GM23248 (cell line): ENCODE measurements at regions of chr7 and their contacts with region 1.

Region 1: GRCh38 chr7:152336754-152337368 is 98.9 kb downstream of the KMT2C start:
- DNase-seq: peak; percentile 71
- H3K4me3 ChIP-seq: no peak overlapping the region
- H3K27ac ChIP-seq: no peak overlapping the region
- H3K4me1 ChIP-seq: peaks cover 12% of the 10 kb centered on the region; the same call in 1 of the 2 replicates
- H3K27me3 ChIP-seq: no peaks in the 10 kb centered on the region

Region 2: DNA sequence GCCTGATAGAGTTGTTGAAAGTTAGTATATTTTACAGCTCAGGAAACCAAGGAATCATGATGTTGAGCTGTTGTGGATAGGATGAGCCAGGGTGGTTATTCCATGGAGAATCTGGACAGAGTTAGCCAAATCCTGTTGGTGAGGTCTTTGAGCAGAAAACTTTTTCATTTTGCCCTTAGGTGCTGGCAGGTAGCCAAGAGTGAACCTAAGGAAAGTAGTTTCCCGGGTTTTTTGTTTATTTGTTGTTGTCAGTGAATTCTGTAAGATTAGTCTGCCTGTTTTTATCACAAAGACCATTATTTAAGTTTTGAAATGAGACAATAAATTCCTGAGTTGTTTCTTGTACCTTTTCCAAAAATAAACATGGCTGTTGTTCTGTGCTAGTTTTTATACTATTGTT is 250.3 kb before region 1 on chr7:
- in situ Hi-C with region 1: no loop called
- DNase-seq: no peak
- H3K4me3 ChIP-seq: no peak overlapping the region
- H3K27ac ChIP-seq: no peak overlapping the region
- H3K4me1 ChIP-seq: no peaks in the 10 kb centered on the region
- H3K27me3 ChIP-seq: no peaks in the 10 kb centered on the region

Region 3: GRCh38 chr7:152615031-152615741 is 278.3 kb after region 1 on chr7:
- in situ Hi-C with region 1: no loop called
- DNase-seq: peak; percentile 24
- H3K4me3 ChIP-seq: no peak overlapping the region
- H3K27ac ChIP-seq: no peak overlapping the region
- H3K4me1 ChIP-seq: 0 out of 2 replicates have a peak, but pooled peaks cover 5% of the 10 kb centered on the region
- H3K27me3 ChIP-seq: no peaks in the 10 kb centered on the region

Region 4: DNA sequence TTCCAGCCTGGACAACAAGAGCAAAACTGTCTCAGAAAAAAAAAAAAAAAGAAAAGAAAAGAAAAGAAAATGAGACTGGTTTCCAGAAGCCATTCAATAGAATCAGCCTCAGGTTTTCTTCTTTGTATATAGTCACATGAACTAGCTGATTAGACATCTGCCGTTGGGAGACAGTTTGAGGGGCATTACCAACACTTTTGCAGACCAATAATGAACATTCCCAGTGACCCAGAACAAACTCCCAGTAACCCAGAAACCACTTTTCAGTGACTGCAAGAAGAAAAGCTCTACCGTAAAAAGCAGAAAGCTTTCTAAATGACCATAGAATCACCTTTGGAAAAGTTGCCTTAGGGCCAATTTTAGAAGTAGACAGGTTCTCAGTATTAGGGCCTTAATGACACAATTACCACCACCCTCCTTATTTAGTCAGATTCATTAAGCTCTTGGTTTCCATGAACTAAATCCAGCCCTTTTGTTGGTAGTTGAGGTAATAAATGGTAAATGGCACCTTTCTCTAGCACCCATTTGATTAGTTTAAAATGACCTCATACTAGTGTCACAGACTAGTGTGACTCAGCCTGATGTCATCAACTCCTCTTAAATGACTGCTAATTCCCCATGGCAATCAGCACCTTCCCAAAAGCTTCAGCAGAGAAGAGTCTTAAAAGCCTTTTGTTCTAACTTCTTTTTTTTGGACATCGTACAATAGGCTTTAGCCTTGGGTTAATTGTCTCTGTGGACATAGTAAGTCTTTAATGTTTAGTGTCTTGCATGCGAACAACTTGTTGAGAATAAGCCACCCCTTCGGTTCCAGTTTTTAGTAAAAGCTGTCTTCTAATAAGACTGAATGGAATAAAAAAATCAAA is 372.7 kb after region 1 on chr7:
- in situ Hi-C with region 1: loop called (anchors 10 kb)
- DNase-seq: peak; percentile 69
- H3K4me3 ChIP-seq: no peak overlapping the region
- H3K27ac ChIP-seq: no peak overlapping the region
- H3K4me1 ChIP-seq: no peaks in the 10 kb centered on the region; the same call in 1 of the 2 replicates
- H3K27me3 ChIP-seq: no peaks in the 10 kb centered on the region

Region 5: GRCh38 chr7:152850420-152850819 is 513.6 kb after region 1 on chr7:
- in situ Hi-C with region 1: no loop called
- DNase-seq: no peak
- H3K4me3 ChIP-seq: no peak overlapping the region
- H3K27ac ChIP-seq: no peak overlapping the region
- H3K4me1 ChIP-seq: no peaks in the 10 kb centered on the region
- H3K27me3 ChIP-seq: no peaks in the 10 kb centered on the region